ENCODE measurements at regions of chr3 and their contacts with region 1.

Region 1: GRCh38 chr3:195106418-195106906 is 164.5 kb downstream of the XXYLT1 start:
- DNase-seq: peak; percentile 70 to 90 (median 88)
- ATAC-seq: peak; percentile 78 to 81
- H3K4me3 ChIP-seq: no peak overlapping the region
- H3K27ac ChIP-seq: no peak overlapping the region
- H3K4me1 ChIP-seq: peaks cover 5% of the 10 kb centered on the region
- H3K27me3 ChIP-seq: no peaks in the 10 kb centered on the region

Region 2: GRCh38 chr3:194250098-194251002 is 856.1 kb before region 1 on chr3:
- intact Hi-C with region 1: no loop called
- DNase-seq: peak; percentile 86 to 92 (median 92)
- ATAC-seq: peak; percentile 62 to 64
- H3K4me3 ChIP-seq: no peak overlapping the region
- H3K27ac ChIP-seq: no peak overlapping the region
- H3K4me1 ChIP-seq: peaks cover 3% of the 10 kb centered on the region
- H3K27me3 ChIP-seq: no peaks in the 10 kb centered on the region

Region 3: GRCh38 chr3:194773216-194773615 is 333.2 kb before region 1 on chr3:
- intact Hi-C with region 1: loop called in 1 of 4 experiments (anchors 10 kb)
- DNase-seq: peak; percentile 74 to 80 (median 78)
- ATAC-seq: peak; percentile 64 to 81
- H3K4me3 ChIP-seq: no peak overlapping the region
- H3K27ac ChIP-seq: peak overlapping the region; percentile 37
- H3K4me1 ChIP-seq: peaks cover 13% of the 10 kb centered on the region
- H3K27me3 ChIP-seq: no peaks in the 10 kb centered on the region

Region 4: DNA sequence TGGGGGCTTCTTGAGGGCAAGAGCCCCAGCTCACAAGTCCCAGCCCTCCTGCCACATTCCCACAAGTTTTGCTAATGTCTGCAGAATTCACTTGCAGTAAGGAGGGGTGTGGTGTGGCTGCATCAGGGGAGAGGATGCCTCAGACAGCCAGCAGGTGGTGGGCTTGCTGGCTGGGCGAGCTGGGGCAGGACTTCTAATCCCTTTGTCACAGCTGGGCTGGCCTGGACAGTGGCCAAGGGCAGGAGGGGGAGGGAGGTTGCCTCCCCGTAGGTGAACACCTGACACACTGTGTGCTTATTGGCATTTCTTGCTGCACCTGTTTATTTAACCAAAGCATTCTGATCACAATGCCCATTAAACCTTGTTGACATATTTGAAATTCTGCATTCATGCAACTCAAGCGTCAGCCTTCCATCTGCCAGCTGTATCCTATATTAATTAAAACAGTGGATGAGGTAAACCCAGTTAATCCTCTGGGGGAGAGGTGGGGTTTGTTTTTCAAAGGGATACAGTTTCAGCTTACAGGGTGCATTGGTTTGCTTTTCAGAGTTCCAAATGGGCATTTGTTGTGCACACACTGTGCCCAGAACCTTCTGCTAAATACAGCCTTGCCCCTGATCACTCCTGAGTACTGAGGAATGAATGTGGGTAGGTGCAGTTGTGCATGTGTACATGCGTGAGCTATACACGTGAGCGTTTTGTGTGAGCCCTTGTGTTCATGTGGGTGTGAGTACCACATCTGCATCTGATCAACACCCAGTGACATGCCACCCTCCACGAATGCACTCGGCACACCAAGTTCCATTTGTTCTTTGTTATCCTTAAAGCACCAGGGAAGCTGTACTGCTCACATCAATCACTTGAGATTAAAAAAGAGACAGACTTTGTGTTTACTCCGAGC is 104.3 kb before region 1 on chr3:
- intact Hi-C with region 1: loop called in 3 of 4 experiments (anchors 2 to 10 kb)
- DNase-seq: peak; percentile 41 to 86 (median 85)
- ATAC-seq: peak; percentile 37 to 53
- H3K4me3 ChIP-seq: no peak overlapping the region
- H3K27ac ChIP-seq: no peak overlapping the region
- H3K4me1 ChIP-seq: peaks cover 6% of the 10 kb centered on the region
- H3K27me3 ChIP-seq: no peaks in the 10 kb centered on the region

Region 5: DNA sequence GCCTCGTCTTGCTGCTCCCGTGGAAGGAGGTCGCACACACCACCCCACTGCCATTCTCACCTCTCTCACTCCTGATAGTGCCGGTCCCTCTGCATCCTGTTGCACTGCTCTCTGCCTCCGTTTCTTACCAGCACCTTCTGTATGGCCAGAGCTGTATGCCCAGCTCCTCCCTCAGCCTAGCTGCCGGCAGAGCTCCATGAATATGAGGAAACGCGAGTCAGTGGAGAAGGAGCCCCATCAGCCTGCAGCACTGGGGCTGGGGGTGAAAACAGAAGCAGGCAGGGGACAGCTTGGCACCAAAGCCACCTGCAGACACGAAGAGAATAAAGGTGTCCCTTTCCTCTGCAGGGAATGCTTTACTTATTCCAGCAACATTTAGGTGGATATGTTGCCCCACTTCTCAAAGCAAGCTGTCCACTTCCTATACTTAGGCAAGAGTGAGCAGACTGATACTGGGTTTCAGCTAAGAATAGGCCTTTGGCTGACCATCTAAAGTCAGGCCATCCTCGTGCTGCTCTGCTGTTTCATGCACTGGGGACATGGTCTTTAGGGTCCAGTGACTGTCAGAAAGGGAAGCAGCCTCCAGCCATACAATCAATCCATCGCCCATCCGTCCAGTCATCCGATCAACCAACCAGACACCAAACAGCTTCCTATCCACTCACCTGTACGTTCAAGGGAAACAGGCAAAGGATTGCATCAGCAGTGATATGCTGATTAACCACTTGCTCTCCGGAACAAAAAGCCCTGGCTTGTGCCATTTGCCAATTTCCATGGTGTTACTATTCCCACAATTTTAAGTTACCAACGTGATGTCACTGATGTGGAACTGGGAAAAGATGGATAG is 58.2 kb before region 1 on chr3:
- intact Hi-C with region 1: loop called in 1 of 4 experiments (anchors 5 kb)
- DNase-seq: no peak
- ATAC-seq: no peak
- H3K4me3 ChIP-seq: no peak overlapping the region
- H3K27ac ChIP-seq: no peak overlapping the region
- H3K4me1 ChIP-seq: no peaks in the 10 kb centered on the region
- H3K27me3 ChIP-seq: no peaks in the 10 kb centered on the region

Region 6: DNA sequence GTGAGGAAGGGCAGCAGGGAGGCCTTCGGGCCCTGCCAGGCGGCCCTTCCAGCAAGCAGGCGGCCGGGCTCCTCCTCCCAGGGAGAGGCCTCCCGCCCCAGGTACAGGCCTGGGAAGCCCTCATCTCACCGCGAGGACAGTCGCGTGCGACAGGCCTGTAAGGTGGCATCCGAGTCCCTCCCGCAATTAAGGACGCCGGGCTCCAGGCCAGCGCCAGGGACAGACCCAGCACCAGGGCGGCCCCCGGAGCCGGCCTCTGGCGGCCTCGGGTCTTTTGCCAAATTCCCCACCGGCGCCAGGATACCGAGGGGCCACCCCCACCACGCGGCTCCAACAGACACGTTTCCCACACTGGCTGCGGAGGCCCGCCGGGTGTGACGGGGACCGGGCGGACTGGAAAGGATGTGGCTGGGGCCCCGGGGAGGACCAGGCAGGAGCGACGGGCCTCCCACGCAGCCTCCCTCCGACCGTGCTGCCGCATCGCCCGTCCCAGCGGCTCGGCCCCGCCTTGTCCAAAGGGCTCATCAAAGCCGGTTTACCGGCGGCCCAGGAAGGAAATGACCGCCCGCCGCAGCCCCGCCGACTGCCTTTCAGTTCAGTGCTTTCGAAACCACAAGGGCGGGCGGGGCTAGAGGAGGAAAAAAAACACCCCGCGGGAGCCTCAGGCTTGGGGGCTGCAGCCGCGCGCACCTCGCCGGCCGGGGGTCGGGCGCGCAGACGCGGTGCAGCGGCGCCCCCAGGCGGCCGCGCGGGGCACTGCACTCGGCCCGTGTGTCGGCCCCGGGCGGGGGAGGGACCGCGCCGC is 153.2 kb after region 1 on chr3:
- intact Hi-C with region 1: loop called in 2 of 4 experiments (anchors 5 kb)
- DNase-seq: peak; percentile 93 to 97 (median 95)
- ATAC-seq: peak; percentile 86 to 88
- H3K4me3 ChIP-seq: peak overlapping the region; percentile 66
- H3K27ac ChIP-seq: peak overlapping the region; percentile 77
- H3K4me1 ChIP-seq: no peaks in the 10 kb centered on the region
- H3K27me3 ChIP-seq: no peaks in the 10 kb centered on the region